Aorta (tissue), 5 donors: ENCODE measurements at regions of chr14 and their contacts with region 1.

Region 1: GRCh38 chr14:105682940-105683570 is 156.7 kb downstream of the TMEM121 start:
- DNase-seq: no peak
- ATAC-seq: no peak
- H3K4me3 ChIP-seq: no peak overlapping the region
- H3K27ac ChIP-seq: no peak overlapping the region
- H3K4me1 ChIP-seq: no peaks in the 10 kb centered on the region
- H3K27me3 ChIP-seq: no peaks in the 10 kb centered on the region

Region 2: GRCh38 chr14:105562713-105563346 is 120.2 kb before region 1 on chr14:
- intact Hi-C with region 1: loop called in 1 of 2 experiments (anchors 10 kb)
- DNase-seq: no peak
- ATAC-seq: no peak
- H3K4me3 ChIP-seq: no peak overlapping the region
- H3K27ac ChIP-seq: no peak overlapping the region
- H3K4me1 ChIP-seq: no peaks in the 10 kb centered on the region
- H3K27me3 ChIP-seq: no peaks in the 10 kb centered on the region